ENCODE measurements at regions of chr2 and their contacts with region 1.

Region 1: DNA sequence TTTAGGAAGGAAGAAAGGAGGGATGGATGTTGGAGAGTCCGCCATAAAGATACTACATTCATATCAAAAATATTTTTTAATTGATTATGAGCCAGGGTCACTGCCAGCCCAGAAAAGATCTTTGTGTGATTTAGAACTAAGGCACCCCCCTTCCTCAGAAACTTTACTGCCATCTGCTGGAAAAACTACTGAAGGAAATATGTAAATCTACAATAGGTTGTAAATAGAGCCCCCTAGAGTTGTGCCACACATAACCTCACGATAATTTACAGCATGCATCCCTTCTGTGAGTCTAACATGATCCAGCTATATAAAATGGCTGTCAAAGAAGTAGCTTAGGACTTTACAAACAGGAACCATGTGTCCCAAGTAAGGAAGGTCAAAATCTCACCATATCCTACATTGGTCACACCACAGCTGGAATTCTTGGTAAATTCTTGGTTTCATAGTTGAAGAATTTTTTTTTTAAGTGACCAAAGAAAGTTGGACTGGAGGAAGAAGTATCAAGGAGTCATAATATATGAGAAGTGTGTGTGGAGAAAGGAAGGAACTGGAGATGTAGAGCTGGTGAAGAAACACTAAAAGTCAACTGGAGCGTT is 152.5 kb downstream of the CYP26B1 start:
- DNase-seq: peak; percentile 27
- ATAC-seq: peak; percentile 88
- H3K4me3 ChIP-seq: no peak overlapping the region
- H3K27ac ChIP-seq: no peak overlapping the region
- H3K4me1 ChIP-seq: no peaks in the 10 kb centered on the region
- H3K27me3 ChIP-seq: no peaks in the 10 kb centered on the region
- CTCF ChIP-seq: peak; percentile 49 to 99 (median 67)
- POLR2A ChIP-seq: no peak
- RAD21 ChIP-seq: peak; percentile 83

Region 2: DNA sequence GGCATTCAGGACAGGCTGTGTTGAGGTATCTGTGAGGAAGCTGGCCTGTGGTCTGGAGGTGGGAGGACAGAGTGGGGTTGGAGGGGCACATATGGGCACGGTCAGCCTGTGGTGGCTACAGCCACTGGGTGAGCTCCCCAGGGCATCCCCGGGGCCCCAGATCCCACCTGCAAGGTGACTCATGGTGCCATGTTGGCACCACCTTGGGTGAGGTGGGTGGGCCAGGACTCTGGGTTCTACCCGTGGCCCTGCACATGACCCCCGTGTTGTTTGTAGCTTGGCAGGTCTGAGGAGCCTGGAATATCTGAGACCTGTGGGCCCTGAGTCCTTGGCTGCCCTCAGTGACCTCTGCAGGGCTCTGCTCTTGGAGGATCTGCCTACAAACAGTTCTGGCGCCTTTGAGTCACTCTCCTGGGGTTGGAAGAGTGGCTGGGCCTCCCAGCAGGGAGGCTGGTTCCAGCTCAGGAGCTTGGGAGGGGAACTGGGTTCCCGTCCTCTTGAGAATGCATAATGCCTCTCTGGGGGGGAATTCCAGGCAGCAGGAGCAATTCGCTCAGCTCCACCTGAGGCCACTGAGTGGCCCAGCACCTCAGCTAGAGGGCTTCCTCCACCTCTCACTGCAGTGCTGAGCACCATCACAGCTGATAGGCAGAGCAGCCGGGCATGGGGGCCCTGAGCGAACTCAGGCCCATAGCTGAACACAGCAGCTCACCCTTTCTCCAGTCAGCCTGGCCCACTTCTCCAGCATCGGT is 436.7 kb before region 1 on chr2:
- CTCF ChIA-PET with region 1: no interaction called
- POLR2A ChIA-PET with region 1: no interaction called
- RAD21 ChIA-PET with region 1: no interaction called
- intact Hi-C with region 1: no loop called
- DNase-seq: no peak
- ATAC-seq: peak; percentile 57
- H3K4me3 ChIP-seq: no peak overlapping the region
- H3K27ac ChIP-seq: no peak overlapping the region
- H3K4me1 ChIP-seq: peaks cover 0 to 11% of the 10 kb centered on the region in 2 experiments; a peak in 2 of 4 replicates
- H3K27me3 ChIP-seq: no peaks in the 10 kb centered on the region
- CTCF ChIP-seq: no peak
- POLR2A ChIP-seq: no peak
- RAD21 ChIP-seq: no peak

Region 3: GRCh38 chr2:72579591-72580180 is 584.5 kb after region 1 on chr2:
- CTCF ChIA-PET with region 1: no interaction called
- POLR2A ChIA-PET with region 1: no interaction called
- RAD21 ChIA-PET with region 1: no interaction called
- intact Hi-C with region 1: loop called (anchors 5 kb)
- DNase-seq: peak; percentile 26
- ATAC-seq: peak; percentile 50; the same call in 1 of the 2 replicates
- H3K4me3 ChIP-seq: no peak overlapping the region
- H3K27ac ChIP-seq: no peak overlapping the region
- H3K4me1 ChIP-seq: no peaks in the 10 kb centered on the region
- H3K27me3 ChIP-seq: no peaks in the 10 kb centered on the region
- CTCF ChIP-seq: peak; percentile 54 to 76 (median 74); a peak in 5 of 6 replicates
- POLR2A ChIP-seq: no peak
- RAD21 ChIP-seq: peak; percentile 87

Measured in HCT116 (cell line).